ENCODE measurements at regions of chr1 and their contacts with region 1.

Region 1: DNA sequence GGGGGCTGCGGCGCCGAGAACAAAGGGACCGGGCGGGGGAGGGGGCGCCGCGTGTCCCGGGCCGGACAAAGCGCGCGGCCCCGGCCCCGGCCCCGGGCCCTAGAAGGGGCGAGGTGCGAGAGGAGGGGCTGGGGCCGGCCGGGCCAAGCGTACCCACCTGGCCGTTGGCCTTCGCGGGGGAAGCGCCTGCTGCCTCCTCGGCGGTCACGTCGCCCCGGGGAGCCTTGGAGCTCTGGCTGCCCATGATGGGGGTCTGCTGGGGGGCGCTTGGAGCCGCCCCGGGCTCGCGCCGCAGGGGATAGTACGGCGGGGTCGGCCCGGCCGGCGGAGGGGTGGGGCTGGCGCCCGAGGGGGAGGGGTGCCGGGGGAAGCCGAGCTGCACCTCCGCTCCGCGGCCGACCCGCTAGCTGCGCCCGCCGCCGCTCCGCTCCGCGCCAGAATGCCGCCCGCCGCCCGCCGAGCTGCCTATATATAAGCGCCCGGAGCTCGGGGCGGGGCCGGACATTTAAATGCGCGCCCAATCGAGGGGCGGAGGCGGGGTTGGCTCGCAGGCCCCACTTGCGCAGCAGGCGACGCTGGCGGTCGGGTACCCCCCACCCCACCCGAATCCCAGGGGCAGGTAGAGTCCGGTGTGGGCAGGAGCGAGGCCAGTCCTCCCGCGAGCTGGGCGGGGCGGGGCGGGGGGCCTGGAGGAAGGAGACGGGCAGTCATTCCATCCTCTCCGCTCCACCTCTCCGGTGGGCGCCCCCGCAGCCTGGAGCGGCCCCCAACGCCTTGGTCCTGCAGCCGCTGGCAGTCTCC is at the start of gene MARCKSL1:
- DNase-seq: no peak
- ATAC-seq: peak; percentile 70
- H3K4me3 ChIP-seq: peak within 1 kb of the TSS; percentile 68 to 70
- H3K27ac ChIP-seq: peak within 1 kb of the TSS; percentile 78
- H3K4me1 ChIP-seq: peaks cover 46% of the 10 kb centered on the region
- H3K27me3 ChIP-seq: no peaks in the 10 kb centered on the region
- CTCF ChIP-seq: no peak
- total RNA-seq, gene MARCKSL1: 176 TPM

Region 2: GRCh38 chr1:32215629-32216480 is 120.1 kb before region 1 on chr1:
- CTCF ChIA-PET with region 1: interaction called, 7 read pairs
- POLR2A ChIA-PET with region 1: interaction called, 16 read pairs
- in situ Hi-C with region 1: no loop called
- intact Hi-C with region 1: no loop called
- DNase-seq: no peak
- ATAC-seq: peak; percentile 95
- H3K4me3 ChIP-seq: no peak overlapping the region
- H3K27ac ChIP-seq: no peak overlapping the region
- H3K4me1 ChIP-seq: peaks cover 5% of the 10 kb centered on the region
- H3K27me3 ChIP-seq: no peaks in the 10 kb centered on the region
- CTCF ChIP-seq: peak; percentile 92

Region 3: GRCh38 chr1:32508751-32509140 is 172.8 kb after region 1 on chr1:
- CTCF ChIA-PET with region 1: no interaction called
- POLR2A ChIA-PET with region 1: no interaction called
- in situ Hi-C with region 1: no loop called
- intact Hi-C with region 1: no loop called
- DNase-seq: no peak
- ATAC-seq: no peak
- H3K4me3 ChIP-seq: no peak overlapping the region
- H3K27ac ChIP-seq: no peak overlapping the region
- H3K4me1 ChIP-seq: no peaks in the 10 kb centered on the region
- H3K27me3 ChIP-seq: no peaks in the 10 kb centered on the region
- CTCF ChIP-seq: no peak

Measured in Panc1 (cell line).